ENCODE measurements at regions of chr5 and their contacts with region 1.

Region 1: DNA sequence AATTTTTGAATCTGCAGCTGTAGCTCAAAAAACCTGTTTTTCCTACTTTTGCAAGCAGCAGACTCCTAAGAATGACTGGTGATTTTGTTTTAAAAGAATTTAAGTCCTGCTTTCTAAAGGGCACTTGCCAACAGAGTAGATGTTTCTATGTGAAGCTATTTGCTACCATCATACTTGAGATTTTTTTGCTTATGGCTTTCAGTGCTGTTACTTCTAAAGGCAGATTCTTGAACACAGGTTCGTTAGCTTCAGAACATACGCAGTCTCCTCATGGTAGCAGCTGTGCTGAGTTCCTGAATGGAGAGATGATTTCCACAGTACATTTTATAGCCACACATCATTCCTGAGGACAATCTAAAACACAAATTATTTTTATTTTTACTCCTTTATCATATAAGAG is 24.4 kb upstream of the ELL2 start:
- DNase-seq: no peak
- ATAC-seq: no peak
- H3K4me3 ChIP-seq: no peak overlapping the region
- H3K4me3 Mint-ChIP-seq: no peak overlapping the region
- H3K27ac ChIP-seq: no peak overlapping the region
- H3K27ac Mint-ChIP-seq: no peak overlapping the region
- H3K4me1 ChIP-seq: no peaks in the 10 kb centered on the region
- H3K4me1 Mint-ChIP-seq: no peaks in the 10 kb centered on the region
- H3K27me3 ChIP-seq: no peaks in the 10 kb centered on the region
- H3K27me3 Mint-ChIP-seq: no peaks in the 10 kb centered on the region
- CTCF ChIP-seq: no peak

Region 2: DNA sequence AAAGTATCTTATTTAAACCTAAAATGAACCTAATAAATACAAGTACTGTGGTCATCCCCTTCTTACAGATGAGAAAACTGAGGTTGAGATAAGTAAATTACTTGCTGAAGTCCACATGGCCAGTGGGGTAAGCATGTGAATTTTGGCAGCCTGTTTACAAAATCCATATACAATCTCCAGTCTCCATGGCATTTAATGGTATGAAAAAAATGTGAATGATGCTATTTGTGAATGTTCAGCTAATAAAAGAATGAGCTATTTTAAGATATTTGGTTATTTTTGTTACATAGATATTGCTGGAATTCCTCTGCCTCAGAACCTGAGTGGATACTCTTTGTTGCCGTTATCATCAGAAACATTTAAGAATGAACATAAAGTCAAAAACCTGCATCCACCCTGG is 385.4 kb before region 1 on chr5:
- CTCF ChIA-PET with region 1: no interaction called
- POLR2A ChIA-PET with region 1: no interaction called
- intact Hi-C with region 1: no loop called
- DNase-seq: no peak
- ATAC-seq: no peak
- H3K4me3 ChIP-seq: no peak overlapping the region
- H3K4me3 Mint-ChIP-seq: no peak overlapping the region
- H3K27ac ChIP-seq: no peak overlapping the region
- H3K27ac Mint-ChIP-seq: no peak overlapping the region
- H3K4me1 ChIP-seq: no peaks in the 10 kb centered on the region
- H3K4me1 Mint-ChIP-seq: no peaks in the 10 kb centered on the region
- H3K27me3 ChIP-seq: no peaks in the 10 kb centered on the region
- H3K27me3 Mint-ChIP-seq: no peaks in the 10 kb centered on the region
- CTCF ChIP-seq: no peak

Region 3: DNA sequence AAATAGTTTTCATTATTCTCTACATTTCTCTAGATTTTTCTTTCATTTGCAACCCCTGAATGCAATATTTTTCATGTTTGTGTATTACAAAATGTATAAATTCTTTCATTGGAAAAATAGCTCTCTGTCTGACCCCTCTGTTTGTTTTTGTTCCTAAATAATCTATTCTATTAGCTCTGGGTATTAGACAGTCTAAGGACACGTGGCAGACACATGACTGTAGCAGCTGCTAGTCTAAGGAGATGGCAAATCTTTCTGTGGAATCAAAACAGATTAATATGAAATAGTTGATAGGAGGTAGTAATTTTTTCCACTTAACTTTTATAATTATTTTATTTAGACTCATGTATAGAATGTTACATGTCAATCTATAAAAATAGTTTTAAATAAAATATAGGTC is 281.9 kb before region 1 on chr5:
- CTCF ChIA-PET with region 1: no interaction called
- POLR2A ChIA-PET with region 1: no interaction called
- intact Hi-C with region 1: no loop called
- DNase-seq: no peak
- ATAC-seq: no peak
- H3K4me3 ChIP-seq: no peak overlapping the region
- H3K4me3 Mint-ChIP-seq: no peak overlapping the region
- H3K27ac ChIP-seq: no peak overlapping the region
- H3K27ac Mint-ChIP-seq: no peak overlapping the region
- H3K4me1 ChIP-seq: no peaks in the 10 kb centered on the region
- H3K4me1 Mint-ChIP-seq: no peaks in the 10 kb centered on the region
- H3K27me3 ChIP-seq: no peaks in the 10 kb centered on the region
- H3K27me3 Mint-ChIP-seq: peaks cover 10% of the 10 kb centered on the region
- CTCF ChIP-seq: no peak

Region 4: GRCh38 chr5:95949810-95950209 is 36.2 kb before region 1 on chr5:
- CTCF ChIA-PET with region 1: no interaction called
- POLR2A ChIA-PET with region 1: no interaction called
- intact Hi-C with region 1: loop called in 1 of 2 experiments (anchors 5 kb)
- DNase-seq: no peak
- ATAC-seq: no peak
- H3K4me3 ChIP-seq: no peak overlapping the region
- H3K4me3 Mint-ChIP-seq: no peak overlapping the region
- H3K27ac ChIP-seq: no peak overlapping the region
- H3K27ac Mint-ChIP-seq: no peak overlapping the region
- H3K4me1 ChIP-seq: no peaks in the 10 kb centered on the region
- H3K4me1 Mint-ChIP-seq: peaks cover 19% of the 10 kb centered on the region
- H3K27me3 ChIP-seq: no peaks in the 10 kb centered on the region
- H3K27me3 Mint-ChIP-seq: no peaks in the 10 kb centered on the region
- CTCF ChIP-seq: no peak

Region 5: DNA sequence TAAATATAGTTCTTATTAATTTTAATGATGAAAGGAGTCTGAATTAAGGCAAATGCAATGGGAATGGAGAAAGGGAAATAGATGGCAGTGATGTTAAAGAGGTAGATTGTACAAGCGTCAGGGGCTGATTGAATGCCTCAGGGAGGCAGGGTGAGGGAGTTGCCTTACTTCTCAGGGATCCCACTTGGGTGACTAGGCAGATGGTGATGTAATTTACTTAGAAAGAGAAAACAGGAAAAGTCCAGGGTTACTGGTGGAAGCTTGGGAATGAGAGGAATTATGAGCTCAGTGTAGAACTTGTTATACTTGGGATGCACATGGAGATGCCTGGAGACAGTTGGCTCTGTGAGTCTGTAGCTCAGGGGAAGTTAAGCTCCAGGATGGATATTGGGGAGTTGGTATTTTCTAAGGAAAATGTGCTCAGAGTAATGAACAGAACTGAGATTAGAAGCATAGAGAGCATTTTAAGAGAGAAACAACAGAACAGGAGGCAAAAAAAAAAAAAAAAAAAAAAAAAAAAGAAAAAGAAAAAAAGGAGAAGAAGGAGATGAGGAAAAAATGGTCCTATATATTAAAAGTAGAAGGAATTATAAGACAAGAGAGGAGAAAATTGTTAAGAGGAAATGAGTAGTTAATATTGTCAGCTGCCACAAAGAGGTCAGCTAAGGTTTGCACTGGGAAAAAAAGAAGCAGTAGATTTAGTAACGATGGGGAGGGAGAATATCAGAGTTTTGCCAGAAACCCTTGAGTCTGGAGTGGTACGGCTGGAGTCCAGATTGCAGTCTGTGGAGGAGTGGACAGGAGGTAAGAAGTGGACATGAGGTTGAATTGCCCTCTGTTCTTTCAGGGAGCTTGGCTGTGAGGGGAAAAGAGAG is 63.6 kb after region 1 on chr5:
- CTCF ChIA-PET with region 1: no interaction called
- POLR2A ChIA-PET with region 1: no interaction called
- intact Hi-C with region 1: no loop called
- DNase-seq: no peak
- ATAC-seq: no peak
- H3K4me3 ChIP-seq: no peak overlapping the region
- H3K4me3 Mint-ChIP-seq: no peak overlapping the region
- H3K27ac ChIP-seq: no peak overlapping the region
- H3K27ac Mint-ChIP-seq: no peak overlapping the region
- H3K4me1 ChIP-seq: no peaks in the 10 kb centered on the region
- H3K4me1 Mint-ChIP-seq: no peaks in the 10 kb centered on the region
- H3K27me3 ChIP-seq: no peaks in the 10 kb centered on the region
- H3K27me3 Mint-ChIP-seq: peaks cover 1% of the 10 kb centered on the region
- CTCF ChIP-seq: no peak

Region 6: DNA sequence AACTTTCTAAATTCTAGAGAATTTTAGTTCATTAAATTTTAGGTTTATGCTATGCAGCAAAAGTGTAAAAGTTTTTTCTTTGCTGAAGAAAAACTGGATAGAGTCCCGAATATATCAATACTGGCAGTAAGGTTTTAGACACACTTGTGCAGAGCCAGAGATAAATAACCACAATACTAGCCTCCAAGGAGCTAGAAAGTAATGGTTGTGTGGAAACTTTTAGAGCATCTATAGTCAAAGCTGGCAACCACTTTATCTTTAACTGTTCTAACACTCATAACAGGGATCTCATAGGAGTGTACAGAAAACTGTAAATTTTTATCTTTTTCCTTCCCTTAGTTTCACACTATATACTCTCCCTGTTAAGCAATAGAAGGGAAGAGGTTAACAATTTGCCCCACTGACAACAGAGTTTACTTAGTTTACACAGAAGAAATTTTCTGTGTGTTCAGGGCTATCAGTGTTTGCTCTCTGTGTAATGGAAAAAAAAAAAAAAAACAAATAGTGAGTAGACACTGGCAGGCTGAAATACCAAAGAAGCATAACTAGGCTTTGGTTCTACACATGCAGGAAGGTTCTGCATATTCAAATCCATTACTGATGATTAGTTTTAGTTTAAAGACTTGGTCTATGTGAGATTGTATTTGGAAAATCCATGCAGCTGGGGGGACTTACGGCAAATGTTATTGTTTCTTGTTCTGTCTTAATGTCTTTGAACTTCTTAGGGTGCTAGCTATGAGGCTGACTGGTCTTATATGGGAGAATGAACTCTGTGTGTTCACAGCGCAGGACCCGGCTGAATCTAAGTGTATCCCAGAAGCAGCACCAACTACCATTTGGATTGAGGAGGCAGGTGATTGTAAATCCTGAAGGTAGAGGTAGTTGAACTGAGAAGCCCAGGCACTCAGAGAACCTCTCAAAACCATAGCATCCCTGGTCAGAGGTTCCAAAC is 259.4 kb after region 1 on chr5:
- CTCF ChIA-PET with region 1: no interaction called
- POLR2A ChIA-PET with region 1: no interaction called
- intact Hi-C with region 1: no loop called
- DNase-seq: no peak
- ATAC-seq: no peak
- H3K4me3 ChIP-seq: no peak overlapping the region
- H3K4me3 Mint-ChIP-seq: no peak overlapping the region
- H3K27ac ChIP-seq: no peak overlapping the region
- H3K27ac Mint-ChIP-seq: no peak overlapping the region
- H3K4me1 ChIP-seq: no peaks in the 10 kb centered on the region
- H3K4me1 Mint-ChIP-seq: no peaks in the 10 kb centered on the region
- H3K27me3 ChIP-seq: no peaks in the 10 kb centered on the region
- H3K27me3 Mint-ChIP-seq: peaks cover 19% of the 10 kb centered on the region
- CTCF ChIP-seq: no peak